ENCODE measurements at regions of chr17 and their contacts with region 1.

Region 1: GRCh38 chr17:49729069-49729468 is 21.3 kb upstream of the SLC35B1 start:
- DNase-seq: no peak
- H3K4me3 ChIP-seq: no peak overlapping the region
- H3K27ac ChIP-seq: no peak overlapping the region
- H3K4me1 ChIP-seq: peaks cover 19% of the 10 kb centered on the region
- H3K27me3 ChIP-seq: no peaks in the 10 kb centered on the region
- CTCF ChIP-seq: no peak
- EP300 ChIP-seq: no peak
- POLR2A ChIP-seq: no peak

Region 2: DNA sequence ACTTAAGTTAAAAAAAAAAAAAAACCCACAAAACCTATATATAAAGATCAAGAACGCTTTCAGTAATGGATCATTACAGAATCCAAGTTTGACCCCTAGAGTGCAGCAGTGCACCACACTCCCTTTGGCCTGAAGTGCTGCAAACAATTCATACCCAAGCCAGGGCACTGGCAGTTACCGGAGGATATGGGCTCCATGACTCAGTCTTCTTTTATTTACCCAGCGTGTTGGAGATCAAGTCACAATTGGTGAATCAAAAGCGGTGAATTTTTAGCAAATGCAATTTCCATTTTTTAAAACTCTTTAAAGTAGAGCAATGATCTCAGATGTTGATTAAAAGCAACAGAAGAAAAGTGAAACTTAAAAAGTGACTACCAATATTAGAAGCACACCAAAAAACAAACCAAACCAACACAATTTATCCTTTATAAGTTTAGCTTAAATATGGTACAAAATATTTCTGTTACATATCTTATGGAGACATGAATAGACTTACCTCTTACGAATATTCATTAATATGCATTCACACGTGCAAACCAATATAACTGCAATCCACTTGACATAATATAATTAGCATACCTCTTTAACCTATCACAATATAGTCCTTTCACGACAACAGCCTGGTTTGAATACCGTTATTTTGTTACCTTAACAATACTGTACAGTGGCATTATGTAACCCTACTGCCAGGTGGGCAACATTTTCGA is 413.4 kb before region 1 on chr17:
- intact Hi-C with region 1: no loop called
- DNase-seq: peak; percentile 62 to 74 (median 67)
- H3K4me3 ChIP-seq: no peak overlapping the region
- H3K27ac ChIP-seq: no peak overlapping the region
- H3K4me1 ChIP-seq: no peaks in the 10 kb centered on the region
- H3K27me3 ChIP-seq: no peaks in the 10 kb centered on the region
- CTCF ChIP-seq: peak; percentile 25 to 61 (median 56)
- EP300 ChIP-seq: no peak
- POLR2A ChIP-seq: no peak

Region 3: GRCh38 chr17:49763735-49764558 is 34.9 kb after region 1 on chr17 and contains the start of gene FAM117A:
- intact Hi-C with region 1: loop called in 2 of 4 experiments (anchors 5 kb)
- DNase-seq: peak; percentile 95 to 98 (median 95)
- H3K4me3 ChIP-seq: peak within 1 kb of the TSS; percentile 64
- H3K27ac ChIP-seq: peak within 1 kb of the TSS in 1 of 2 donors; percentile 49
- H3K4me1 ChIP-seq: peaks cover 7% of the 10 kb centered on the region
- H3K27me3 ChIP-seq: no peaks in the 10 kb centered on the region
- CTCF ChIP-seq: no peak
- EP300 ChIP-seq: no peak
- POLR2A ChIP-seq: peak; percentile 52
- total RNA-seq, gene FAM117A: 16.0 to 30.4 (median 19.0) TPM